ENCODE measurements at regions of chr5 and their contacts with region 1.

Region 1: GRCh38 chr5:44515487-44515886 is 126.3 kb upstream of the FGF10 start:
- DNase-seq: no peak
- H3K4me3 ChIP-seq: no peak overlapping the region
- H3K4me3 Mint-ChIP-seq: no peak overlapping the region
- H3K27ac Mint-ChIP-seq: no peak overlapping the region
- H3K4me1 ChIP-seq: no peaks in the 10 kb centered on the region
- H3K4me1 Mint-ChIP-seq: no peaks in the 10 kb centered on the region
- H3K27me3 ChIP-seq: no peaks in the 10 kb centered on the region
- H3K27me3 Mint-ChIP-seq: peaks cover 5% of the 10 kb centered on the region
- CTCF ChIP-seq: no peak

Region 2: DNA sequence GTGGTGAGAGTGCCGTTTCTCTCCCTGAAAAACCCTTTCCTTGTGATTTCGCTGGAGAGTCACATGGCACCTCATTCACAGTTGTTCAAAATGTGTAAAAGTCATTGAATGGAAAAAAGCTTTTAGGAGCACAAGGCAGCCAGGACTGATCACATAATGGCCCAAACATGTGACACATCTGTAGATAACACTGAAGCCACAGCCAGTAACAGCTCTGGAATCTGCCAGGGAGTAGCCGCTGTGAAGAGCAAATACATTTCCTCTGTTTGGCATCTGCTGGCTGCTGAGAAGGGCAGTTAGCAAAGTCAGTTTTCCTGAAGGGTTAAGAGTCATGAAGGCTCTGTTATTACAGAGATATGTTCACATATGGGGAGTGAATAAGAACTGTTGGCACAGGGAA is 640.7 kb before region 1 on chr5:
- CTCF ChIA-PET with region 1: no interaction called
- POLR2A ChIA-PET with region 1: no interaction called
- intact Hi-C with region 1: loop called (anchors 5 kb)
- DNase-seq: no peak
- H3K4me3 ChIP-seq: no peak overlapping the region
- H3K4me3 Mint-ChIP-seq: no peak overlapping the region
- H3K27ac Mint-ChIP-seq: no peak overlapping the region
- H3K4me1 ChIP-seq: no peaks in the 10 kb centered on the region
- H3K4me1 Mint-ChIP-seq: no peaks in the 10 kb centered on the region
- H3K27me3 ChIP-seq: no peaks in the 10 kb centered on the region; the same call in 1 of the 2 replicates
- H3K27me3 Mint-ChIP-seq: no peaks in the 10 kb centered on the region
- CTCF ChIP-seq: no peak

Region 3: GRCh38 chr5:44845777-44846176 is 330.3 kb after region 1 on chr5:
- CTCF ChIA-PET with region 1: no interaction called
- POLR2A ChIA-PET with region 1: no interaction called
- intact Hi-C with region 1: no loop called
- DNase-seq: no peak
- H3K4me3 ChIP-seq: no peak overlapping the region
- H3K4me3 Mint-ChIP-seq: no peak overlapping the region
- H3K27ac Mint-ChIP-seq: no peak overlapping the region
- H3K4me1 ChIP-seq: no peaks in the 10 kb centered on the region
- H3K4me1 Mint-ChIP-seq: no peaks in the 10 kb centered on the region
- H3K27me3 ChIP-seq: no peaks in the 10 kb centered on the region
- H3K27me3 Mint-ChIP-seq: peaks cover 6% of the 10 kb centered on the region
- CTCF ChIP-seq: no peak